Activated naive CD4-positive, alpha-beta T cell treated with anti-CD3 and anti-CD28 coated beads, Interleukin-2, amount 10 ng/mL, durations not matched to agents 7 days and 5 days (primary cell): ENCODE measurements at regions of chr1 and their contacts with region 1.

Region 1: DNA sequence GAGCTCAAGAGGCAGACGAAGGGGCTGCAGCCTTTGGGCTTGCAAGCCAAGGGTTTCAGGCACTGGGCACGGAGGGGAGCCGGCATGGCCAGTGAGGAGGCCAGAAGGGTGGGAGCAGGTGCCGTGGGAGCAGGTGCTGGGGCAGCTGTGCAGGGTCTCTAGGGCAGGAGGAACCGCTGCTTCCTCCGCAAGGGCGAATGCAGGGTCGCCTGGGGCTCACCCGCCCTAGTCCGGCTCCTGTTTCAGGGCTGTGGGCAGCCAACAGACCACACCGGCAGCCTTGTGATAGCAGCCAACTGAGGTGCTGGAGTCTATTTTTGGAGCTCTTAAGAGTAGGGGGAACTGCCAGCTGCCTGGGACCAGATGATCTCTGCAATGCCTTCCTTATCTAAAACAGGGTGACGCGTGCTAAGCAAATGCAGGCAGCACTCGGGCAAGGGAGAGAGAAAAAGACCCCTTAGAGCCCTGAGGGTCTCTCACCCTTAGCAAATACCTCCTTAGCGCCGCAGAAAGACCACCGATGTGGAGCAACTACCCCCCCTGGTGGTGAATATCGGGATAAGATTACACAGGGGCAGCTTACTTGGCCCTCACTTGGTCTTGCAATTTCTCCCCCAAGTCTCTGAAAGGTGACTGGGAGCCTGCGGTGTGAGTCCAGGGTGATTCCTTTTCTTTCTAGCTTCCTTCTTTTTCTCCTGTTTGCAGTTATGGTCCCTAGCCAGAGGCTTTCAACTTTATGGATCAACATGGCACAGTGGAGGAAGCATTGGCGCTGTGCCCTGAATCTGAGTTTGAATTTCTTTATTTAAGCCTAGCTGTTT is 20.7 kb upstream of the MAPKAPK2 start:
- DNase-seq: peak; percentile 76
- H3K4me3 Mint-ChIP-seq: no peak overlapping the region
- H3K27ac Mint-ChIP-seq: no peak overlapping the region
- H3K4me1 Mint-ChIP-seq: peaks cover 20% of the 10 kb centered on the region
- H3K27me3 Mint-ChIP-seq: peaks cover 68% of the 10 kb centered on the region

Region 2: DNA sequence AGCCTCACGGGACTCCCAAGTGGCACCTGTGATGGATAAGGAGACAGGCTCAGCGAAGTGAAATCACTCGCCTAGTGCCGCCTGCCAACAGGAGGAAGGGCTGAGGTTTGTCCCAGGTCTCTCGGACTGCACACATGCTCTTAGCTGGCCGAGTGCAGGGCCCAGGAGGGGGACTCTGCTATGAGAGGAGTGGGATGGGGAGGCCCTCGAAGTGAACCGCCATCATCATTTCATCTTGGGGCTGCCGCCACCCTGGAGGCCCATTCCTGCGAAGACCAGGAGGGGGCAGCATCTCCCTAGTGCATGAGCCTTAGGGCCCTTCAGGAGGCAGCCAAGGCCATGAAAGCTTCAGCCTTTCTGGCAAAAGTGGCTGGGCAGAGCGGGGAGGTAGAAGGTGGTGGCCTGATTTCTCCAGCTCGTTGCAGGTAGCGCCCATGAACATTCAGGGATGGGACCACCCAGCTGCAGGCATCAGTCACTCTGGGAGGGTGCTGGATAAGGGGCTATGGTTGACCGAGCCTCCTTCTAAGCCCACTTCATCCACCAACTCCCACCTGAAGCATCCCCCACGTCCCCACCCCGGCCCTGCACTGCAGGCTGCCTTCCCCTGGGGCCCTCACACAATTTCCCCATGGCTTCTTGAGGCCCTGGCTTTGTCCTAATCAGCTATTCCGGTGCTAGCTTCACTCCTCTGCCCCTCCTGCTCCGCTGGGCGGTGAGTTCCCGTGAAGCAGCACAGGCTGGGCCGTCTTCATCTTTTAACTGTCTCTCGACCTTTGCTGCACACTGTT is 173.9 kb before region 1 on chr1:
- CTCF ChIA-PET with region 1: interaction called, 27 read pairs
- DNase-seq: peak; percentile 76
- H3K4me3 Mint-ChIP-seq: no peak overlapping the region
- H3K27ac Mint-ChIP-seq: peak overlapping the region; percentile 1
- H3K4me1 Mint-ChIP-seq: peaks cover 5% of the 10 kb centered on the region
- H3K27me3 Mint-ChIP-seq: no peaks in the 10 kb centered on the region

Region 3: DNA sequence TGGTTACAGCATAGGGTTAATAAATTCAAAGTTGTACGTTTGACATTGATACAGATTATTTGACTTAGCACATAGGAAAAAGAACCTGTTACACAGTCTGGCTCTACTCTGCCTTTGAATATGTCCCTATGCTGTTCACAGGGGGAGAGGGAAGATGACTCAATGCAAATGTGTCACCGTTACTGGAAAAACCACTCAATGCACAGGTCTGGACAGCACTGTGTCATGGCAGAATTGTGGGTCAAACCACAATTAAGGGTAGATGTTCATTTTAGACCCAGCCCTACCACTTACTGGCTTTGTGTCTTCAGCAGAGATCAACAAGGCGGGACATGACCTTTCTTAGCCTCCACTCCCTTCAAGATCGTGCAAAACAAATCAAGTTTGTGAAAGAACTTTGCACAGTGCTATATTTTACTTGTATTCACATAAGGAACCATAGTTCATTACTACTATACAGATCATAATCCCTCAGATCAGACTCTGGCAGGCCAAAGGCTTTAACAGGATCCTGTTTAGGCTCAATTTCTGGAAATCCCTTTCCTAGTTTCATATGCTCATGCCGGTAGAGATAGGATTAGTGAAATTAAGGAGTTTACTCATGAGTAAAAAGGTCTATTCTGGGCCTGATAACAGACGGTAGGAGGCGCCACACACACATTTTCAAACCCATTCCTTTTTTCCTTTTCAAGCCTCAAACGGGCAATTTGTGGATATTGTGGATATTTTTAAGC is 73.8 kb before region 1 on chr1:
- CTCF ChIA-PET with region 1: interaction called, 13 read pairs
- DNase-seq: peak; percentile 65
- H3K4me3 Mint-ChIP-seq: peak overlapping the region; percentile 5
- H3K27ac Mint-ChIP-seq: peak overlapping the region; percentile 91
- H3K4me1 Mint-ChIP-seq: peaks cover 64% of the 10 kb centered on the region
- H3K27me3 Mint-ChIP-seq: no peaks in the 10 kb centered on the region

Region 4: DNA sequence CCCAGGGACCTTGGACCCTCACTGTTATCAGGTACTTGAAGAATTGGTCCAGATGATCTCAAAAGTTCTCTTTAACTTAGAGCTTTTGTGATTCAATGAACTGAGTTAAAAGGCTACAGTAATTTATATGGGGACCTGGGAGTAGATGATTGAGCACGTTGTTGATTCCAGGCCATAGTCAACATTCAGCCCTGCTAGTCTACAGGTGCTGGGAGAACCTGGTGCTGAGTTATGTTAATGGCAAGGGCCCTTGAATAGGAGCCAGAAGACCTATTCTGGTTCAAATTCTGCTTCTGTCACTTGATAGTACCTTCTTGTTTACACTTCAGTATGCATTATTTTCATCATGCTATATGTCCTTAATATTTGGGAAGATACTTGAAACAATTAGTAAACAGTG is 17.5 kb before region 1 on chr1:
- CTCF ChIA-PET with region 1: interaction called, 26 read pairs
- DNase-seq: no peak
- H3K4me3 Mint-ChIP-seq: no peak overlapping the region
- H3K27ac Mint-ChIP-seq: no peak overlapping the region
- H3K4me1 Mint-ChIP-seq: no peaks in the 10 kb centered on the region
- H3K27me3 Mint-ChIP-seq: no peaks in the 10 kb centered on the region

Region 5: DNA sequence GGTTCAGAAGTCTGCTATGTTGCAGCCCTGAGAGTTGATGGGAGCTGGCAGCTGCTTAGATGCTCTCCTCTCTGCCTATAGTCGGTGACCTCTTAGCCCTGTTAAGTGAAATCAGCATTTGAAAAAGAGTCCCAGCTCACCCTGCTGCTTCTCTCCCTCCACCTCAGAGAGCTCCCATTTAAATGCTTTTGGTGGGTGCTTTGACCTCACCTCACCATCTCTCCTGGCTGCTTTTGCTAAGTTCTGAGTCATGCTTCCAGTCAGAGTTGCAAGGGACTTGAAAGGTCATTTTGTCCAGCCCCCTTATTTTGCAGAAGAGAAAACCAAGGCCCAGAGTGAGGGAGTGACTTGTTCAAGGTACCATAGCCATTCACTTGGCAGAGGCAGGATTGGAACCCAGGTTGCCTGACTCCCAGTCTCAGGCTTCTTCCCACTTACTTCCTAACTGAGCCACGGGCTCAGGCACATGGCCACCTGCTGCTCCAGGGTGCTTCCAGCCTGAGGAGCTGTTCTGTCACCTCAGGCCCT is 23.9 kb after region 1 on chr1:
- CTCF ChIA-PET with region 1: interaction called, 12 read pairs
- DNase-seq: no peak
- H3K4me3 Mint-ChIP-seq: no peak overlapping the region
- H3K27ac Mint-ChIP-seq: no peak overlapping the region
- H3K4me1 Mint-ChIP-seq: peaks cover 35% of the 10 kb centered on the region
- H3K27me3 Mint-ChIP-seq: peaks cover 18% of the 10 kb centered on the region

Region 6: DNA sequence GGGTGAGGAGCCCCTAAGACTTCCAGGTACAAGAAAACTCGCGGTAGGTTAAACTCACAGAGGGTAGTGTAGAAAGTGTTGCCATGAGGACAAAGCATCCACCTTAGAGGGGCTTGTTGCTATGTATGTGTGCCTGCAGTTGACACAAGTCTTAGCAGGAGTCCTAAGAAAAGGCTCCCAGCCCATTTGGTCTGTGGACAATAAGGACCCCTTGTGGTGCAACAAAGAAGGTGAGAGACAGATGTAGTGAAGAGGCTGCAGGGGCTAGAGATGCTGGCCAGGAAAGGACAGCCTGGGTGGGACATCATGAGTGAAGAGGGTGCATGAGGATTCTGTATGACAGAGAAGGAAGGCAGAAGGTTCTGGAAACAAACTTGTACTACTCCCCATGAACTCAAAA is 144.6 kb after region 1 on chr1:
- CTCF ChIA-PET with region 1: interaction called, 26 read pairs
- DNase-seq: peak; percentile 66
- H3K4me3 Mint-ChIP-seq: no peak overlapping the region
- H3K27ac Mint-ChIP-seq: no peak overlapping the region
- H3K4me1 Mint-ChIP-seq: peaks cover 46% of the 10 kb centered on the region
- H3K27me3 Mint-ChIP-seq: peaks cover 9% of the 10 kb centered on the region

Region 7: DNA sequence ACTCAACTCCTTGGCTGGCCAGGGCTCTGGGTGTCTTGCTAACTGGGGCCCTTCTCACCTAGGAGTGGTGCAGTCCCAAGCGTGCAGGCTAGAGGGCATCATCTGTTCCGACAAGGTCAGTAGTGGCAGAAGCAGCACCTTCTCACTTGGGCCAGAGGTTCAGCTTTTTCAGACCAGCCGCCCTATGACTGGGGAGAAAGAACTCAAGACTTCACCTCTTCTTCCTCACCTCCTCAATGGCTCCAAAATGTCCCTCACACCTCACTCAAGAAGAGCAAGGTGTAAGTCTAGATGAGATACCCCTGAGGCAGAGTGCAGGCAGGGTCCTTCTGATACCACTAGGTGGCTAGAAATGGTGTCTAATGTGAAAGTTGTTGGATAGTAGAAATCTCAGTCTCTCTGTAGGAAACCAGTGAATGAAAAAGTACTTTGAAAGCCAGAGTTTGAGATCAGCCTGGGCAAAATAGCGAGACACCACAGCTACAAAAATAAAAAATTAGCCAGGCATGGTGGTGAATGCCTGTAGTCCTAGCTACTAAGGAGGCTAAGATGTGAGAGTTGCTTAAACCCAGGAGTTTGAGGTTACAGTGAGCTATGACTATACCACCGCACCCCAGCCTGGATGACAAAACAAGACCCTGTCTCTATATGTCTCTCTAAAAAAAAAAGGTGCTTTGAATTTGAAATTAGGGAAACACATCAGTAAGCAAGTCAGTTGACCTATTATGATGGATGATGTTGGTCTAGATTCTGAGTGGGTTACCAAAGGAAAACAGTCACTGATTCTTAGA is 192.8 kb after region 1 on chr1:
- CTCF ChIA-PET with region 1: no interaction called
- DNase-seq: peak; percentile 36
- H3K4me3 Mint-ChIP-seq: no peak overlapping the region
- H3K27ac Mint-ChIP-seq: no peak overlapping the region
- H3K4me1 Mint-ChIP-seq: peaks cover 38% of the 10 kb centered on the region
- H3K27me3 Mint-ChIP-seq: peaks cover 34% of the 10 kb centered on the region